Gastrocnemius medialis (tissue), 4 donors: ENCODE measurements at regions of chr18 and their contacts with region 1.

Region 1: DNA sequence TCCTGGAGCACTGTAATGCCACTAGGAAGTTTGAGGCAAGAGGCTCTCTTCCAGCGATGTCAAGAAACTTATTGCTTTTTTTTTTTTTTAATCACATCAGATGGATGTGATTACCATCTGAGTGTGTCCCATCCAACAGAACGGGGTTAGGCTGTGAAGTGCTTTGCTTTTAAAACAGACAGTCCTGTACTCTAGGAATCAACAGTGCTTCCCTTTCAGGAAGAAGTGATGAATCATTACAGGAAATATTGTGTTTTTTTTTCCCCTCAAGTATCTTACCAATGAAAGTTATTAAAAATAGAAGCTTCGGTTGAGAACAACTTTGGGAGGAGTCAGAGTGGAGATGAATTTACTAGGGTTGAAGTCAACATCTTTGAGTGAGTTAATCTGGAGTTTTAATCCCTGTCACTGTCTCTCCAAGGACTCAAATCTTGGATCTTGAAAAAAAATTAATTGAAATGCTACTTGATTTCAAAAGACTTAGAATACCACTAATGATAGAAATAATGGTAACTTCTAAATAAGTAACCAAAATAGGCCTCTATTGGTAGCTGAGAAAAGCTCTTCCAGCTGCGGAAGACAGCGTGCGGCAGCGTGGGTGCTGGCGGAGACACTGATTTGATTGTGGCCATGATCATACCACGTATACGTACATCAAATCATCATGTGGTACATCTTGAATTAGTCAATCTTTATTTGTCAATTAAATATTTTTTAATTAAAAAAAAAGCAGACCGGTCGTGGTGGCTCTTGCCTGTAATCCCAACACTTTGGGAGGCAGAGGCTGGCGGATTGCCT is 45.5 kb downstream of the GATA6 start:
- DNase-seq: no peak
- ATAC-seq: peak in 1 of 2 donors; percentile 39
- H3K4me3 ChIP-seq: no peak overlapping the region
- H3K27ac ChIP-seq: no peak overlapping the region
- H3K4me1 ChIP-seq: no peaks in the 10 kb centered on the region
- H3K27me3 ChIP-seq: no peaks in the 10 kb centered on the region
- CTCF ChIP-seq: no peak
- POLR2A ChIP-seq: no peak

Region 2: DNA sequence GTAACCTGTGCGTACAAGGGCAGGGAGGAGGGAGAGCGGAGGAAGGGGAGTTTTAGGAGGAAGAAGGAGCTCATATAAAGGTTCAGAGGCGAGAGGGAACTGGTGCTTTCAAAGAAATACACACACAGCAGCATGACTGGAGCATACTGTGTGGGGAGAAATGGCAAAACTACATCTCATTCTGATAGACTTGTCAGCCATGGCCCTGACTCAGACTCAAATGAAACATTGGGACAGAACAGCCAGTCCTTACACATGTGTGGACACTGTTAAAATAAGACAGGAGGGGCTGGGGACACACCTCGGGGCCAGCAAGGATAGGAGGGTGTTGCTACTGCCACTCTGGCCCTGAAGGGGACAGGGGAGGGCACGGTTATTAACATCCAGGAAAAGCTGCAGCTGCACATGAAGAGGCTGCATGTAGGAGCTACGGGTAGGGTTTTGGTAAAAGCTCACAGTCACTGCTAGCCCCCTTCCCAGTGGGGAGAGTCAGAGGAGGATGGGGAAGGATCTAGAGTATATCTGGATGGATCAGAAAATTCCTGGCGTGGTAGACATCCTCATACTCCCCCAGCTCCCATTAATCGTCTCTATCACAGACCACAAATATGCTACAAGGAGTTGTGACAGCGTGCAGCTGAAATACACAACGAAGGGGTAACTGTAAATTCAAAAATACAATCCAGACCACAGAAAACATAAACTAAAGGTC is 65.0 kb after region 1 on chr18:
- in situ Hi-C with region 1: loop called in 1 of 4 experiments (anchors 10 kb)
- intact Hi-C with region 1: no loop called
- DNase-seq: no peak
- ATAC-seq: no peak
- H3K4me3 ChIP-seq: no peak overlapping the region
- H3K27ac ChIP-seq: no peak overlapping the region
- H3K4me1 ChIP-seq: no peaks in the 10 kb centered on the region
- H3K27me3 ChIP-seq: no peaks in the 10 kb centered on the region
- CTCF ChIP-seq: no peak
- POLR2A ChIP-seq: no peak